ENCODE measurements at regions of chr6 and their contacts with region 1.

Region 1: DNA sequence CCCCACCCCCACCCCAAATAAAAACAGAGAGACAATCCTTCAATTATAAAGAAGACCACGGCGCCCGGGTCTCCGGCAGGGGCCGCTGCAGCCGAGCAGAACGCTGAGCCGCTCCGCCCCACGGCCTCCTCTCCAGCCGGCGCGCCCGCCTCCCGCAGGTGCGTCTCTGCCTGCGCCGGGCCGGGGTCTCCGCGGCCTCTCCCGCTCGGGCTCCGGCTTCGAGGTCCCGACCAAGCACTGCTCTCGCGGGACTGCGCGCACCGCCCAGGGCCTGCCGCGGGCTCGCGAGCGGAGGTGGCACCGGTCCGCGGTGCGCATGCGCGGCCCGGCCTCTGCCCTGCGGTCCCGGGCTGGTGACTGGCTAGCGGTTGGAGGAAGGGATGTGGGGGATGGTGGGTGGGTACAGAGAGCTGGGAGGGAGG is 241 bp upstream of the SIRT5 start:
- DNase-seq: peak; percentile 95
- ATAC-seq: peak; percentile 80
- H3K4me3 Mint-ChIP-seq: peak overlapping the region; percentile 89
- H3K27ac Mint-ChIP-seq: peak overlapping the region; percentile 99
- H3K4me1 Mint-ChIP-seq: peaks cover 24% of the 10 kb centered on the region
- H3K27me3 Mint-ChIP-seq: no peaks in the 10 kb centered on the region

Region 2: GRCh38 chr6:13355043-13355951 is 218.9 kb before region 1 on chr6:
- CTCF ChIA-PET with region 1: interaction called, 17 read pairs
- DNase-seq: peak; percentile 54
- ATAC-seq: peak; percentile 67
- H3K4me3 Mint-ChIP-seq: peak overlapping the region; percentile 65
- H3K27ac Mint-ChIP-seq: peak overlapping the region; percentile 96
- H3K4me1 Mint-ChIP-seq: peaks cover 44% of the 10 kb centered on the region
- H3K27me3 Mint-ChIP-seq: no peaks in the 10 kb centered on the region

Region 3: DNA sequence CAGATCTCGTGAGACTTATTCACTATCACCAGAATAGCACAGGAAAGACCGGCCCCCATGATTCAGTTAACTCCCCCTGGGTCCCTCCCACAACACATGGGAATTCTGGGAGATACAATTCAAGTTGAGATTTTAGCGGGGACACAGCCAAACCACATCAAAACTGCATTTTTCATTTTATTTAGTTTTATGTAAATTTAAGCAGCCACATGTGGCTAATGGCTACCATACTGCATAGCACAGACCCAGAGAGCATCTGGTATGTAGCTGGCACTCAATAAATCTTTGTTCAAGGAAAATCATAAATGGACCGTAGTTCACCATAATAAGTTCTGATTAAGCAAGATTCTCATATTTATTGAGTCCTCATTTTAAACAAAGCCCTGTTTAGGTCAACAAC is 102.1 kb before region 1 on chr6:
- CTCF ChIA-PET with region 1: no interaction called
- DNase-seq: no peak
- ATAC-seq: no peak
- H3K4me3 Mint-ChIP-seq: no peak overlapping the region
- H3K27ac Mint-ChIP-seq: no peak overlapping the region
- H3K4me1 Mint-ChIP-seq: no peaks in the 10 kb centered on the region
- H3K27me3 Mint-ChIP-seq: no peaks in the 10 kb centered on the region

Region 4: GRCh38 chr6:13487122-13488014 is 86.8 kb before region 1 on chr6 and contains the start of gene GFOD1:
- CTCF ChIA-PET with region 1: interaction called, 33 read pairs
- DNase-seq: peak; percentile 86
- ATAC-seq: peak; percentile 87
- H3K4me3 Mint-ChIP-seq: peak within 1 kb of the TSS; percentile 79
- H3K27ac Mint-ChIP-seq: peak within 1 kb of the TSS; percentile 71
- H3K4me1 Mint-ChIP-seq: peaks cover 43% of the 10 kb centered on the region
- H3K27me3 Mint-ChIP-seq: peaks cover 9% of the 10 kb centered on the region
- total RNA-seq, gene GFOD1: 10.6 to 11.6 TPM

Region 5: DNA sequence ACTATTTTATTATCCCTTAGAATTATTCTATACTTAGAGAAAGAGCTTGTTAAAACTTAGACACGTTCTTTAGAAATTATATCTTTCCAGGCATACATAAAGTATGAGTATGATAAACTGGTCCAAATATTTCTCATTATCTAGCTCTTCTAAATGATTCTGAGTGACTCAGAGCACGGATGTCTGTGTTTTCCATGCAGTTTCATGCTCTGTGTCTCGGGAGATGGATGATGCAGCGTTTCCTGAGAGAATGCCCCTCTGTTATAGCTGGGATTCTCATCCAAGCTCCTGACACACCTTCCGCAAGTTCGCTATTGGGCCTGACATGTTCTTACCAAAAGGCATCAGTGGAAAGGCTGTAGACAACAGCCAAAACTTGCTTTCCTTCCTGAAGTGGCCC is 19.6 kb after region 1 on chr6:
- CTCF ChIA-PET with region 1: interaction called, 11 read pairs
- DNase-seq: no peak
- ATAC-seq: no peak
- H3K4me3 Mint-ChIP-seq: no peak overlapping the region
- H3K27ac Mint-ChIP-seq: no peak overlapping the region
- H3K4me1 Mint-ChIP-seq: peaks cover 2% of the 10 kb centered on the region
- H3K27me3 Mint-ChIP-seq: no peaks in the 10 kb centered on the region

Region 6: DNA sequence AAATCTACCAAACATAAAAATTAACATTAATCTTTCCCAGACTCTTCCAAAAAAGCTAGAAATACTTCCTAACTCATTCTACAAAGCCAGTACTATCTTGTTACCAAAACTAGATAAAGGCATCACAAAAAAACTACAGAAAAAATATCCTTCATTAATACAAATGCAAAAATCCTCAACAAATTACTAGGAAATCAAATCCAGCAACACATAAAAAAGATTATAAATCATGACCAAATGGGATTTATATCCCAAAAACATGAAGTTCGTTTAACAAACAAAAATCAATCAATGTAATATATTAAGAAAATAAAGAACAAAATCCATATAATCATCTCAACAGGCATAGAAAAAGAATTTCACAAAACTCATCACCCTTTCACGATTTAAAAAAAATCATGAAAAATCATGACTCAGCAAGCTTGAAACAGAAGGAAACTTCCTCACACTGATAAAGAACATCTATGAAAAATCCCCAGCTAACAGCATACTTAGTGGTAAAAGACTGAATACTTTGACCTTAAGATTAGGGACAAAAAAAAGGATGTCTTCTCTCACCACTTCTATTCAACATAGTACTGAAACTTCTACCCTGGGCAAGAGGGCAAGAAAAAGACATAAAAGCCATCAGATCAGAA is 94.2 kb after region 1 on chr6:
- CTCF ChIA-PET with region 1: no interaction called
- DNase-seq: no peak
- ATAC-seq: peak; percentile 64
- H3K4me3 Mint-ChIP-seq: no peak overlapping the region
- H3K27ac Mint-ChIP-seq: peak overlapping the region; percentile 45
- H3K4me1 Mint-ChIP-seq: peaks cover 62% of the 10 kb centered on the region
- H3K27me3 Mint-ChIP-seq: no peaks in the 10 kb centered on the region

Region 7: GRCh38 chr6:13767121-13767808 is 193.1 kb after region 1 on chr6:
- CTCF ChIA-PET with region 1: interaction called, 13 read pairs
- DNase-seq: peak; percentile 69
- ATAC-seq: peak; percentile 57
- H3K4me3 Mint-ChIP-seq: peak overlapping the region; percentile 72
- H3K27ac Mint-ChIP-seq: peak overlapping the region; percentile 73
- H3K4me1 Mint-ChIP-seq: peaks cover 48% of the 10 kb centered on the region
- H3K27me3 Mint-ChIP-seq: no peaks in the 10 kb centered on the region